AG04450 (cell line): ENCODE measurements at regions of chr20 and their contacts with region 1.

Region 1: DNA sequence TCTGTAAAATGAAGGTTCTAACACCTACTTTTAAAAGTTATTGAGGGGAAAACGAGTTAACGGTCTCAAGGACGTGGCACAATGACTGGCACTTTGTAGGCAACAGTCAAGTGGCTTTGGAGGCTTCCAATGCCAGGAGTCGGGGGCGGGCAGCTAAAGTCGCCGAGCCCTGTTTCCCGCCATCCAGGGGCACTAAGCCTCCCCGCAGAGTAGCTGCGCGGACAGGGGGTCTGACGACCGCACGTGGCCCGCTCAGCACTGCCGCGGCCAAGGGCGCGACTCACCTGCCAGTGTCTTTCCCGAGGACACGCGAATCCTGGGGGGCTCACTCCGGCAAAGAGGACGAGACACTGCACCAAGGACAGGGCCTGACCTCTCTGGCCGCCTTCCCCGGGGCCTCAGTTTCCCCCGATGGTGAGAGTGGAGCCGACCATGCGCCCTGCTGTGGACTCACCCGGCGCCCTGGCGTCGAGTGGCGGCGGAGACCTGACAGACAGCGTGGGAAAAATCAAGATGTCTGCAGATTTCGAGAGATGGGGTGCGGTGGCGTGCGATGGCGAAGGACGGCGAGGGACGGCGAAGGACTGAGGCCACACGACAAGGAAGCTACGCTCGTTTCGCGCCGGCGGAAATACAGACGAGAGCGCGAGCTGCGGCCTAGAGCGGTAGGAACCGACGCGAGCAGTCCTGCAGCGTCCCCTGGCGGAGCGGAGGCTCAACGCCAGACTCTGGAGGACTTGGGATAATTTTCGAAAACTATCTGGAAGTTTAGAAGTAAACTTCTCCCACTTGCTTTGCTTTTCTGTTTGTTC is at the start of gene SNHG17:
- DNase-seq: peak; percentile 91
- H3K4me3 ChIP-seq: peak within 1 kb of the TSS; percentile 95
- H3K27ac ChIP-seq: peak within 1 kb of the TSS; percentile 61
- H3K27me3 ChIP-seq: no peaks in the 10 kb centered on the region
- CTCF ChIP-seq: peak; percentile 100
- polyA plus RNA-seq, gene SNHG17: 14.4 and 18.5 TPM in 2 replicates

Region 2: DNA sequence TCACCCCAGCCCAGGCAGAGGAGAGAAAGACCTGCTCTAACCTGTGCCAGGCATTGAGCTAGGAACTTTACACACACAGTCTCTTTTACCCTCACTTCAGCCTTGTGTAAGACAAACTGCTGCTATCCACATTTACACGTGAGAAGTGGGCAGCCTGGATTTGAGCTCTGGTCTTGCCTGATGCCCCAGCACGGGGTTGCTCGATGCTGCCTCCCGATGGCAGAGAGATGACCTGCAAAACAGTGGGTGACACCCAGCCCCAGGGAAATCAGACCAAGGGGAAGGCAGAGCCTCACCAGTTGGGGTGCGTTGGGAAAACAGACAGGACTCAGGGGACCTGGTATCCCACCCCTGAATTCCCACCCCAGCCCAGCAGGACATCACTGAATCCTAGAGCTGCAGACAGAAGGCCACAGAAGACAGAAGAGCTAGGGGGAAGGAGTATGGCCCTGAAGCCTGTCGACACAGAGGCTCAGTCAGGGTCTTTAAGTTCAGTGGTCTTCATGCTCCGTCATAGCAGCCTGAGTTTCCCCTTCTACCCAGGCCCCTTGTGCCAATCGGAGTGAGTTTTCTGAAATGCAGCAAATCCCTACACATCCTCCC is 130.0 kb before region 1 on chr20:
- CTCF ChIA-PET with region 1: interaction called, 10 read pairs
- POLR2A ChIA-PET with region 1: no interaction called
- DNase-seq: no peak
- H3K4me3 ChIP-seq: no peak overlapping the region
- H3K27ac ChIP-seq: no peak overlapping the region
- H3K27me3 ChIP-seq: peaks cover 20% of the 10 kb centered on the region
- CTCF ChIP-seq: peak; percentile 65

Region 3: GRCh38 chr20:38446441-38447209 is 11.7 kb after region 1 on chr20:
- CTCF ChIA-PET with region 1: interaction called, 99 read pairs
- POLR2A ChIA-PET with region 1: interaction called, 36 read pairs
- DNase-seq: peak; percentile 90
- H3K4me3 ChIP-seq: peak overlapping the region; percentile 91
- H3K27ac ChIP-seq: peak overlapping the region; percentile 57
- H3K27me3 ChIP-seq: no peaks in the 10 kb centered on the region
- CTCF ChIP-seq: peak; percentile 94

Region 4: DNA sequence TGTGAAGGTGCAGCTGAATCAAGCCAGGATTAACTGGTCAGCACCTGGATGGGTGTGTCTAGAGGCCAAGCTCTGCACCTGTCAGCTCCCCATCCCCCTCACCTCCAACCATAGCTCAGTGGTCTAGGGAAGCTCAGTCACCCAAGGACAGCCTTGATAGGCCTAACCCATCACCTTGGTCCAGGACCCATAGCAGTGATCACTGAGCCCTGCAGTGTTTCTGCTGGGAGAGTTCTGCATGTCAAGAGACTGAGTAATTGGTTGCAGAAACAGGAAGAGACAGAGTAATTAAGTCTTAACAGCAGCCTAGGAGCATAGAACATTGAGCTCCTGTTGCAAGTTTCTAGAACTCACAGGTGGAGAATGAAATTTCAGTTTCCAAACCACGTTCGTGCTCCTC is 19.0 kb after region 1 on chr20:
- CTCF ChIA-PET with region 1: interaction called, 11 read pairs
- POLR2A ChIA-PET with region 1: interaction called, 5 read pairs
- DNase-seq: no peak
- H3K4me3 ChIP-seq: no peak overlapping the region
- H3K27ac ChIP-seq: no peak overlapping the region
- H3K27me3 ChIP-seq: no peaks in the 10 kb centered on the region
- CTCF ChIP-seq: no peak

Region 5: DNA sequence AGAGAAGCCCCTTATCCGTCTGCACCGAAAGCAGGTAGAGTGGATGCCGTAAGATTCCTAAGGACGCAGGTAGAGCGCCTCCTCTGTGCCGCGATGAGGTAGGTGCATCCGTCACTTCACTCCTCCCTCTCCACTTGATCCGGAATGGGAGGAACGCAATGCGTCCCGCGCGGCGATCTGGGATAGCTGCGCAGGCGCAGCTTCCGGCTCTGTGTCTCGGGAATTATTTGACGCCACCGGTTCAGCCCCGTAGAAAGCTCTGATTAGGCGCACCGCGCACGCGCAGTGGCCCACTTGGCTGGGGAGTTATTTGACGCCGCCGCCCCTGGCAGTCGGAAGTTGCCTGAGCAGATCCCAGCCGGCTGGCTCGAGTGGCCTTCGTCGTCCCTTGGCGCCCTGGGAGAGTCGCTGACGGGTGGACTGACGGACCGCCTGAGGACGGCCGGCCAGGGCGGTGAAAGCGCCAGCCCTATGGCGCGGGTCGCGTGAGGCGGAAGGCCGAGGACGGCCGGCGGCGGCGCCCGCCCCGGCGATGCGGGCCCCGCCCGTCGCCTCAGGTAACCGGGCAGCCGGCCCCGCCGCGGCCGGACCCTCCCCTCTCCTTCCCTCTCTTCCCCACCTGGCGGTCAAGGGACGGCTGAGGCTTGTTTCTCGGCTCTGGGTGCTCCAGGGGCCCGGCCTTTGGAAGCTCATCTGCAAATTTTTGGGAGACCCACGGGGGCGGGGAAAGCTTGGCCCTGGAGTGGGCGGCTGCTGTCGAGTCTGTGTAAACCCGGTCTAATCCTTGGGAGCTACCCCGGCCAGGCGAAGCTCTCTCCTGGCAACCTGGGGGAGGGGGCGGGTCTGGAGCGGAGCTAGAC is 37.8 kb after region 1 on chr20 and contains the start of gene RALGAPB:
- CTCF ChIA-PET with region 1: interaction called, 15 read pairs
- POLR2A ChIA-PET with region 1: interaction called, 15 read pairs
- DNase-seq: peak; percentile 94
- H3K4me3 ChIP-seq: peak within 1 kb of the TSS; percentile 80
- H3K27ac ChIP-seq: peak within 1 kb of the TSS; percentile 61
- H3K27me3 ChIP-seq: no peaks in the 10 kb centered on the region
- CTCF ChIP-seq: peak; percentile 52
- polyA plus RNA-seq, gene RALGAPB: 24.1 and 30.1 TPM in 2 replicates

Region 6: GRCh38 chr20:38962044-38962927 is 527.3 kb after region 1 on chr20 and contains the start of gene DHX35:
- CTCF ChIA-PET with region 1: no interaction called
- POLR2A ChIA-PET with region 1: no interaction called
- DNase-seq: peak; percentile 83
- H3K4me3 ChIP-seq: peak within 1 kb of the TSS; percentile 93
- H3K27ac ChIP-seq: peak within 1 kb of the TSS; percentile 82
- H3K27me3 ChIP-seq: no peaks in the 10 kb centered on the region
- CTCF ChIP-seq: peak; percentile 51
- polyA plus RNA-seq, gene DHX35: 13.5 and 14.4 TPM in 2 replicates